Activated CD4-positive, alpha-beta memory T cell treated with anti-CD3 and anti-CD28 coated beads for 36 hours (primary cell): ENCODE measurements at regions of chr1 and their contacts with region 1.

Region 1: GRCh38 chr1:109532365-109533136 is 7.1 kb upstream of the GPR61 start:
- DNase-seq: peak; percentile 94
- H3K4me3 Mint-ChIP-seq: peak overlapping the region; percentile 59
- H3K27ac Mint-ChIP-seq: peak overlapping the region; percentile 81
- H3K4me1 Mint-ChIP-seq: peaks cover 20% of the 10 kb centered on the region
- H3K27me3 Mint-ChIP-seq: no peaks in the 10 kb centered on the region

Region 2: GRCh38 chr1:109213785-109214468 is 318.6 kb before region 1 on chr1 and contains the start of gene SARS1:
- CTCF ChIA-PET with region 1: interaction called, 19 read pairs
- POLR2A ChIA-PET with region 1: interaction called, 4 read pairs
- intact Hi-C with region 1: no loop called
- DNase-seq: peak; percentile 92
- H3K4me3 Mint-ChIP-seq: peak within 1 kb of the TSS; percentile 98
- H3K27ac Mint-ChIP-seq: peak within 1 kb of the TSS; percentile 97
- H3K4me1 Mint-ChIP-seq: peaks cover 31% of the 10 kb centered on the region
- H3K27me3 Mint-ChIP-seq: no peaks in the 10 kb centered on the region
- total RNA-seq, gene SARS1: 245 to 251 TPM

Region 3: DNA sequence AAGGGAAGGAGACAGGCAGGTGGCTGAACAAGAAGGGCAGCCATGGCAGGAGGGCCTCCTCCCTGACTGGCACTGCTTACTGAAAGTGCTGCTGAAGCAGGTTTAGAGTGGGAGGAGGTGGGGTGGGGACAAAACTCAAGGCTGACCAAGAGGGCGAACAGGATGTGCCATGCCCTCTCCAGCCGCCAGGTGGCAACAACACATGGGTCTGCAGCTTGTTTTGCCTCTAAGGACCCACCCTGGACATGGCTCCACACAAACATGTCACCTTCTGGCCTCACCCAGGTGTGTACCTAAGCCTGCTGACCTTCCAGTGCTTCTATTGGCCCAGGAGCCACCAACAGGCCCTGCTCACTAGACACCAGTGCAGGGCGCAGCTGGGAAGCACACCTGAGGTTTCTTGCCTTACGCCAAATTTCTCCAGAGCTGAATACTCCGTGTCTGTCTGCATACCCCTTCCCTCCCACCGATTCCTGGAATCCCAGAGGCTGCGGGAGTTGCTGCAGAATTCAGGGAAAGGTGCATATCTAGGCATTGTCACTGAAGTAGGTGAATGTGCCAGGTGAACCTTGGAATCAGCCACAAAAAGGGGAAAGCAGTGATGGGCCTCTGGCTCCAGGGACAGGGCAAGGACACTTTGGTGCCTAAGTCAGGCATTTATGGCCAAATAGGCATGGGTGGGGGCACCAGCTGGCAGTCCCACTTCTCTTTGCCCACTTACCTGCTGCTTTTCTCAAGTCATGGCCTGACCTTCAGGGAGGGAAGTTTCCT is 254.9 kb before region 1 on chr1:
- CTCF ChIA-PET with region 1: interaction called, 64 read pairs
- POLR2A ChIA-PET with region 1: no interaction called
- intact Hi-C with region 1: loop called (anchors 2 kb)
- DNase-seq: peak; percentile 83
- H3K4me3 Mint-ChIP-seq: no peak overlapping the region
- H3K27ac Mint-ChIP-seq: no peak overlapping the region
- H3K4me1 Mint-ChIP-seq: peaks cover 8% of the 10 kb centered on the region
- H3K27me3 Mint-ChIP-seq: no peaks in the 10 kb centered on the region

Region 4: DNA sequence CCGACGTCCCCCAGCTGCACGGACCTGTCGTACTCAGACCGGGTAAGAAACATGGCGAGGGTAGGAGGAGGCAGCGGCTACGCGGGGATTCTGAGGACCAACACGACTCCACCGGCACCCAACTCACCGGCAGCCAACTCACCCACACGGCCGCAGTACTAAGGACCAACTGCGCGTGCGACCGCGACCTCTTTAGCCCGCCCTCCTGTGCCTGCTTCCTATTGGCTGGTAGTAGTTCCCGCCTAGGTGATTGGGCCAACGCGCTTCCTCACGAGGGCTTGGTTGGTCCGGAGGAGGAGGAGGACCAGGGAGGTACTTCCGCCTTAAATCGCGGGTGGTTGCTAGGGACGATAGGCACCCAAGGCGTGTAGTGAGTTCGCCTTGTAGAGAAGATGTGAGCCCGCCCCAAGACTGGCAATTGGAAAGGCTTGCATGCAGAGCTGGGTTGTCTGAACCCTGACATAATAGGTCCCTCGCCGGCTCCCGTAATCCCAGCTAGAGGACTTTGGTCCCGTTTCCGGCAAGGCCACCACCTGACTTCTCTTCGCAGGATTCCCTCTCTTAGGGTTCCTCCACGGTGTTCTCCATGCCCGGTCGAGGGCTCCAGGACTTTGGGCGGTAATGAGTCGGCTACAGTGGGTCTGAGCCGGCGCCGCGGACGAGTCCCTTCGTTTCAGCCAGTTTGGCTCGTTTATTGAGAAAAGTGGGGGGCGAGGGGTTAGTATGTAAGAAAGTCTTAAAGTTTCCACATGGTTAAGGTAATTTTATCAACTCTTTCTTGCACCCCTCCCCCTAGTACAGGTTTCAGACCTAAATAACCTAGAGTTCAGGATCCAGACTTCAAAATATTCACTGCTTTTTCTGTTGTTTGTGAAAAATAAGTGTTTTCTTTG is 106.0 kb before region 1 on chr1 and contains the start of gene PSMA5:
- CTCF ChIA-PET with region 1: interaction called, 52 read pairs
- POLR2A ChIA-PET with region 1: interaction called, 5 read pairs
- intact Hi-C with region 1: loop called (anchors 1 kb)
- DNase-seq: peak; percentile 98
- H3K4me3 Mint-ChIP-seq: peak within 1 kb of the TSS; percentile 93
- H3K27ac Mint-ChIP-seq: peak within 1 kb of the TSS; percentile 98
- H3K4me1 Mint-ChIP-seq: peaks cover 38% of the 10 kb centered on the region
- H3K27me3 Mint-ChIP-seq: no peaks in the 10 kb centered on the region
- total RNA-seq, gene PSMA5: 217 to 218 TPM

Region 5: GRCh38 chr1:109516872-109517271 is 15.7 kb before region 1 on chr1:
- CTCF ChIA-PET with region 1: interaction called, 1,096 read pairs
- POLR2A ChIA-PET with region 1: no interaction called
- intact Hi-C with region 1: no loop called
- DNase-seq: no peak
- H3K4me3 Mint-ChIP-seq: no peak overlapping the region
- H3K27ac Mint-ChIP-seq: no peak overlapping the region
- H3K4me1 Mint-ChIP-seq: no peaks in the 10 kb centered on the region
- H3K27me3 Mint-ChIP-seq: no peaks in the 10 kb centered on the region